ENCODE measurements at regions of chr9 and their contacts with region 1.

Region 1: GRCh38 chr9:18255158-18255629 is 218.8 kb upstream of the ADAMTSL1 start:
- DNase-seq: peak; percentile 53 to 82
- ATAC-seq: peak; percentile 64 to 90 (median 84)
- H3K4me3 ChIP-seq: no peak overlapping the region
- H3K4me3 Mint-ChIP-seq: no peak overlapping the region
- H3K27ac ChIP-seq: no peak overlapping the region
- H3K27ac Mint-ChIP-seq: no peak overlapping the region
- H3K4me1 ChIP-seq: no peaks in the 10 kb centered on the region
- H3K4me1 Mint-ChIP-seq: no peaks in the 10 kb centered on the region
- H3K27me3 ChIP-seq: no peaks in the 10 kb centered on the region
- H3K27me3 Mint-ChIP-seq: peaks cover 0 to 3% of the 10 kb centered on the region in 2 donors
- CTCF ChIP-seq: peak; percentile 99

Region 2: DNA sequence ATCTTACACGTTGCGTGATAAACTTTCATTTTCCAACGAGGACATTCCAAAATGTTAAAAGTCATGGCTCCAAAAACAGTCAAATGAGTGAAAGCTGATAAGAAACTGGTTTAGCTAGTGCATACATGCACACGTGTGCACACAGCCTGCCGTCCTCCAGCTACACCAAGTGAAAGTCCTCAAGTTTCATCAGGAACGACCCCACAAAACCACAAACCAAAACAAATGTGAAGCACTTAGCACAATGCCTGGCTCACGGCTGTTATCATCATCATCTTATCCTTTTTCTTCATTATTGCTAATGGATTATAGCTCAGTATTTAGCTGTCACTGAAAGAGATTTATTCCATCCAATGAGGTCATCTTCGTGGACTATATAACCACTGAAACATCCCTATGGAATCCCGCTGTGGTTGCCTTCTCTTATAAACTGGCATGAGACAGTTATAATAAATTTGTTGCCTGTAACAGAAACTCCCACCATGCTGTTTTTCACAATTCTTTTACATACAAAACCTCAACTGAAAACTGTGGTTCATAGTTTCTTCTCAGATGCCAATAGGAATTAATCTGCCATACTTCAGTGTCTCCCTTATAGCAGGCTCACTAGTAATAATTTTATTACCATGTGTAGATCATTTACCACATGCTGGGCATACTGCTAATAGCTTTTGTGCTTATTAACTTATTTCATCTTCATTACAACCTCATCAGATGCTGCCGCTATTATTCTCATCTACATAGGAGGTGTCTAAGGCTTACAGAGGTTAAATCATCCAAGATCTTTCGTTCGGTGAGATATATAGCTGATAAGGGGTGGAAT is 721.7 kb after region 1 on chr9:
- intact Hi-C with region 1: no loop called
- DNase-seq: no peak
- ATAC-seq: no peak
- H3K4me3 ChIP-seq: no peak overlapping the region
- H3K4me3 Mint-ChIP-seq: no peak overlapping the region
- H3K27ac ChIP-seq: no peak overlapping the region
- H3K27ac Mint-ChIP-seq: no peak overlapping the region
- H3K4me1 ChIP-seq: no peaks in the 10 kb centered on the region
- H3K4me1 Mint-ChIP-seq: peaks cover 7 to 12% of the 10 kb centered on the region in 2 donors
- H3K27me3 ChIP-seq: no peaks in the 10 kb centered on the region
- H3K27me3 Mint-ChIP-seq: peaks cover 20 to 54% of the 10 kb centered on the region in 2 donors
- CTCF ChIP-seq: no peak

Region 3: GRCh38 chr9:19028835-19029451 is 773.7 kb after region 1 on chr9:
- intact Hi-C with region 1: loop called (anchors 10 kb)
- DNase-seq: peak in 1 of 2 donors; percentile 64
- ATAC-seq: peak in 2 of 3 donors; percentile 38 to 60
- H3K4me3 ChIP-seq: no peak overlapping the region
- H3K4me3 Mint-ChIP-seq: no peak overlapping the region
- H3K27ac ChIP-seq: no peak overlapping the region
- H3K27ac Mint-ChIP-seq: no peak overlapping the region
- H3K4me1 ChIP-seq: no peaks in the 10 kb centered on the region
- H3K4me1 Mint-ChIP-seq: peaks cover 0 to 4% of the 10 kb centered on the region in 2 donors
- H3K27me3 ChIP-seq: no peaks in the 10 kb centered on the region
- H3K27me3 Mint-ChIP-seq: peaks cover 11 to 20% of the 10 kb centered on the region in 2 donors
- CTCF ChIP-seq: peak; percentile 71

Region 4: GRCh38 chr9:19174127-19174912 is 919.1 kb after region 1 on chr9:
- intact Hi-C with region 1: loop called (anchors 5 kb)
- DNase-seq: peak; percentile 34 to 67
- ATAC-seq: peak; percentile 88 to 95 (median 95)
- H3K4me3 ChIP-seq: no peak overlapping the region
- H3K4me3 Mint-ChIP-seq: peak overlapping the region; percentile 43
- H3K27ac ChIP-seq: no peak overlapping the region
- H3K27ac Mint-ChIP-seq: peak overlapping the region; percentile 60 to 71
- H3K4me1 ChIP-seq: peaks cover 7% of the 10 kb centered on the region
- H3K4me1 Mint-ChIP-seq: peaks cover 11 to 25% of the 10 kb centered on the region in 2 donors
- H3K27me3 ChIP-seq: no peaks in the 10 kb centered on the region
- H3K27me3 Mint-ChIP-seq: no peaks in the 10 kb centered on the region
- CTCF ChIP-seq: peak; percentile 72

Measured in natural killer cell (primary cell).